GM10248 (cell line): ENCODE measurements at regions of chr18 and their contacts with region 1.

Region 1: DNA sequence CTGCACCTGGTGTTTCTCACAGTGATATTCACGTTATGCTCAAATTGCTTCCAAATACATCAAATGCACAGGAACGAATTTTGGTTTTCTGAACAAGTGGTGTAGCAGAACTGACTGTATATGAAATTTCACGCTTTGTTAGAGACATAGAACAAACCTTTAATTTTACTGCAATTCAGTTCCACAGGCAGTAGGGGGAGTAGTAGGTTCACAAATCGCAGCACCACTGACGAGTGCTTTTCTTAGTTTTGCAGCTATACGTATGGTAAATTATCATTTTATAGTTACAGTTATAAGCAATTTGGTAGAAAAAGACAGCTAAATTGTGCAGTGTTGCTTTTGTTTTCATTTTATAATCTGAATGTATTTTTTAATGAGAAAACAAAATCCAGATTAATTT is 113.3 kb downstream of the KIAA1328 start:
- DNase-seq: peak; percentile 50
- CTCF ChIP-seq: peak; percentile 58

Region 2: DNA sequence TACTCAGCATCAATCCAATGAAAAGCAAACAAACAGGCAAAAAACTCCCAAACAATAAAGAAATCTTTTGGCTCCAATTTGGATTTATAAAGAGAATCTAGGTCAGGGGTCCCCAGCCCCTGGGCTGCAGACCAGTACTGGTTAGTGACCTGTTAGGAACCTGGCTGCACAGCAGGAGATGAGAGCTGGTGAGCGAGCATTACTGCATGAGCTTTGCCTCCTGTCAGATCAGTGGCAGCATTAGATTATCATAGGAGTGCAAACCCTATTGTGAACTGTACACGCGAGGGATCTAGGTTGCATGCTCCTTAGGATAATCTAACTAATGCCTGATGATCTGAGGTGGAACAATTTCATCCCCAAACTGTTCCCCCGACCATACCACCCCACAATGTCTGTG is 11.2 kb before region 1 on chr18:
- CTCF ChIA-PET with region 1: interaction called, 13 read pairs
- POLR2A ChIA-PET with region 1: no interaction called
- DNase-seq: no peak
- CTCF ChIP-seq: no peak